Adrenal gland (tissue), 19 donors: ENCODE measurements at regions of chr20 and their contacts with region 1.

Region 1: GRCh38 chr20:62065669-62066338 is at the start of gene TAF4:
- DNase-seq: peak; percentile 69 to 79 (median 75)
- H3K4me3 ChIP-seq: peak within 1 kb of the TSS in 3 of 4 donors; percentile 25 to 80 (median 77)
- H3K27ac ChIP-seq: peak within 1 kb of the TSS; percentile 48 to 100 (median 78)
- H3K4me1 ChIP-seq: peaks cover 11 to 39% of the 10 kb centered on the region in 2 donors
- H3K27me3 ChIP-seq: no peaks in the 10 kb centered on the region
- CTCF ChIP-seq: no peak
- POLR2A ChIP-seq: peak; percentile 94 to 97
- total RNA-seq, gene TAF4: 10.0 to 30.9 (median 15.6) TPM

Region 2: DNA sequence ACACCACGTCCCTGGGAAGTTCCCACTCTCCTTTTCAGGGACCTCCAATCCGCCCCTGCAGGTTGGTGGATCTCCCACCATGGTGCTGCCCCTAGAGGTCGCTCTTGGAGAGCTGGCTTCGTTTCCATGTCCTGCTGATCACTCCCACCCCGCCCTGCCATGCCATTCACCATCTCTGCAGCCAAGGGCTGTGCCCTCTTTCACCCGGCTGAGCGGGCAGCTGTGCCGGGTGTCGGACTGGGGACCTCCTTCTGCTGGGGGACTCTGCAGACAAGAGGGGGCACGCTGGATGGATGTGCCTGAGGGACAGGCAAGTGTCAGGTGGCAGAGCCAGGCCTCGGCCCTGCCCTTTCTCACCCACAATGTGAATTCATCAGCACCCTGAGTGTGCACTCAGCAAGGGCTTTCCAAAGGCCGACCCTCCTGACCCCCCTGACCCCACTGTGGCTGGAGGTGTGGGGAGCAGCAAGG is 466.7 kb before region 1 on chr20:
- intact Hi-C with region 1: no loop called
- DNase-seq: no peak
- H3K4me3 ChIP-seq: no peak overlapping the region
- H3K27ac ChIP-seq: no peak overlapping the region
- H3K4me1 ChIP-seq: no peaks in the 10 kb centered on the region
- H3K27me3 ChIP-seq: no peaks in the 10 kb centered on the region
- CTCF ChIP-seq: no peak
- POLR2A ChIP-seq: no peak

Region 3: DNA sequence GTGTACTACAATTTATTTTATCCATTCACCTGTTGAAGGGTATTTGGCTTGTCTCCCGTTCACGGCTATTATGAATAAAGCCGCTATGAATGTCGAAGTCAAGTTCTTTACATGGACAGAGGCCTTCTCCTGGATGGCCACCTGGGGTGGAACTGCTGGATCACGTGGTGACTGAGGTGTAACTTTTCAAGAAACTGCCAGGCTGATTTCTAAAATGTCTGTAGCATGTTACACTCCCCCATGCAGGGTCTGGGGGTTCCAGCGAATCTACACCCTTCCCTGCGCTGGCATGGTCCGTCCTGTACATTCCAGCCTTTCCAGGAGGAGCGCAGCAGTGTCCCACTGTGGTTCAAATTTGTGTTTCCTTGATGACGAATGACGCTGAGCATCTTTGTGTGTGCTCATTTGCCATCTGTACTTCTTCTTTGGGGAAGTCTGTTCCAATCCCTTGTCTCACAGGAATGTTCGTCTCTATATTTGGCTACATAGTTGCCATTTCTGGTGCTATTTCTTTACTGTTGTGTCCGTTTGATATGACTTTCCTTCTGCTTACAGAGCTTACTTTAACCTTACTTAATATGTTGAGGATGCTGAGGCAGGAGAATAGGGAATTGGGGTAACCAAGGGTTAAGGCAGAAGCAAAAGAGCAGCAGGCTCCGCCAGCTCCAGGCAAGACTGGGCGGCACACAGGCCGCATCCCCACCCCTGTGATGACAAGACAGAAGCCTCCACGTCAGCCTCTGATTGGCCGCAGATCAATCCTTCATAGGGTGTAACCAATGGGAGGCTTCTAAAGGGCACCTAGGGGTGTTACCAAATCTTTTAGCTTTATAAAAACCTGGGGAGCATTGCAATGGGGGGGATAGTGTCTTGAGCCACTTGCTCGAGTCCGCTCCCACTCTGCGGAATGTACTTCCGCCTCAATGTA is 106.8 kb before region 1 on chr20:
- intact Hi-C with region 1: no loop called
- DNase-seq: peak in 4 of 7 donors; percentile 2 to 28 (median 12)
- H3K4me3 ChIP-seq: no peak overlapping the region
- H3K27ac ChIP-seq: no peak overlapping the region
- H3K4me1 ChIP-seq: peaks cover 4 to 11% of the 10 kb centered on the region in 2 donors
- H3K27me3 ChIP-seq: no peaks in the 10 kb centered on the region
- CTCF ChIP-seq: no peak
- POLR2A ChIP-seq: no peak

Region 4: GRCh38 chr20:61991476-61991875 is 74.3 kb before region 1 on chr20:
- intact Hi-C with region 1: no loop called
- DNase-seq: no peak
- H3K4me3 ChIP-seq: no peak overlapping the region
- H3K27ac ChIP-seq: no peak overlapping the region
- H3K4me1 ChIP-seq: no peaks in the 10 kb centered on the region
- H3K27me3 ChIP-seq: no peaks in the 10 kb centered on the region
- CTCF ChIP-seq: no peak
- POLR2A ChIP-seq: no peak

Region 5: GRCh38 chr20:62117658-62118057 is 51.9 kb after region 1 on chr20:
- intact Hi-C with region 1: loop called in 1 of 2 experiments (anchors 5 kb)
- DNase-seq: no peak
- H3K4me3 ChIP-seq: no peak overlapping the region
- H3K27ac ChIP-seq: no peak overlapping the region
- H3K4me1 ChIP-seq: no peaks in the 10 kb centered on the region
- H3K27me3 ChIP-seq: no peaks in the 10 kb centered on the region
- CTCF ChIP-seq: no peak
- POLR2A ChIP-seq: no peak

Region 6: GRCh38 chr20:62136283-62137091 is 70.7 kb after region 1 on chr20:
- intact Hi-C with region 1: loop called in 1 of 2 experiments (anchors 5 kb)
- DNase-seq: peak; percentile 52 to 87 (median 76)
- H3K4me3 ChIP-seq: no peak overlapping the region
- H3K27ac ChIP-seq: peak overlapping the region in 3 of 5 donors; percentile 35 to 89 (median 66)
- H3K4me1 ChIP-seq: peaks cover 23 to 52% of the 10 kb centered on the region in 2 donors
- H3K27me3 ChIP-seq: no peaks in the 10 kb centered on the region
- CTCF ChIP-seq: peak; percentile 40 to 76 (median 70)
- POLR2A ChIP-seq: no peak

Region 7: GRCh38 chr20:62143118-62143973 is 77.5 kb after region 1 on chr20 and contains the starts of genes PSMA7 and SS18L1:
- intact Hi-C with region 1: loop called in 1 of 2 experiments (anchors 5 kb)
- DNase-seq: peak; percentile 81 to 89 (median 87)
- H3K4me3 ChIP-seq: peak within 1 kb of the TSS; percentile 28 to 99 (median 52)
- H3K27ac ChIP-seq: peak within 1 kb of the TSS; percentile 69 to 100 (median 94)
- H3K4me1 ChIP-seq: peaks cover 25 to 41% of the 10 kb centered on the region in 2 donors
- H3K27me3 ChIP-seq: no peaks in the 10 kb centered on the region
- CTCF ChIP-seq: no peak
- POLR2A ChIP-seq: peak; percentile 96 to 98
- total RNA-seq, gene PSMA7: 216 to 518 (median 291) TPM
- total RNA-seq, gene SS18L1: 9.0 to 45.7 (median 13.9) TPM

Region 8: DNA sequence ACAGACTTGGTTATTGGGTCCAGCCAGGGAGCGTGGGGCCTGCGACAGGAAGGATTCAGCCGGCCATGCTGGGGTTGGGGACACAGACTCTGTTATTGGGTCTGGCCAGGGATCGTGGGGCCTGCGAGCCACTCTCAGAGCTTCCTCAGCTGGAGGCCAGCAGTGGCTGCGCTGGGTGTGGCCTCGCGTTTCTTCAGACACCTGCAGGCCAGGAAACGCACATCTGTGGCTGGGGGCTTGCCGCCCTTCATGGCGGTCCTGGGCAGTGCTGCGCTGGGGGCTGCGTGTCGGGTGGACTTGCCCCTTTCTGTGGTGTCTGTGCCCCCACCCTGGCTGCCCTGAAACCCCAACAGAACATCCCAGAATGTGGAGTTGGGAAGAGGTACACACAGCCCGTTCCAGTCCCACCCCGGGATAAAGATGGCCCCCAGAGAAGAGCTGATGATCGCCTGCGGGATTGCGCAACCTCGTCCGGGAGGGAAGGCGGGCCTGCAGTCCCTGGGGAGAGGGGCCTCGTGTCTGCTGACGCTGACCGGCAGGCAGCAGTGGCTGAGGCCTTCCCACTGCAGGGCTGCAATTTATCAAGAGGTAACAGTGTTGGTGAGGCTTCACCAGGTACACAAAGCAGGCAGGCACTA is 100.1 kb after region 1 on chr20:
- intact Hi-C with region 1: no loop called
- DNase-seq: no peak
- H3K4me3 ChIP-seq: no peak overlapping the region
- H3K27ac ChIP-seq: no peak overlapping the region
- H3K4me1 ChIP-seq: no peaks in the 10 kb centered on the region
- H3K27me3 ChIP-seq: no peaks in the 10 kb centered on the region
- CTCF ChIP-seq: no peak
- POLR2A ChIP-seq: no peak